Dorsolateral prefrontal cortex (tissue), 120 donors: ENCODE measurements at regions of chr3 and their contacts with region 1.

Region 1: DNA sequence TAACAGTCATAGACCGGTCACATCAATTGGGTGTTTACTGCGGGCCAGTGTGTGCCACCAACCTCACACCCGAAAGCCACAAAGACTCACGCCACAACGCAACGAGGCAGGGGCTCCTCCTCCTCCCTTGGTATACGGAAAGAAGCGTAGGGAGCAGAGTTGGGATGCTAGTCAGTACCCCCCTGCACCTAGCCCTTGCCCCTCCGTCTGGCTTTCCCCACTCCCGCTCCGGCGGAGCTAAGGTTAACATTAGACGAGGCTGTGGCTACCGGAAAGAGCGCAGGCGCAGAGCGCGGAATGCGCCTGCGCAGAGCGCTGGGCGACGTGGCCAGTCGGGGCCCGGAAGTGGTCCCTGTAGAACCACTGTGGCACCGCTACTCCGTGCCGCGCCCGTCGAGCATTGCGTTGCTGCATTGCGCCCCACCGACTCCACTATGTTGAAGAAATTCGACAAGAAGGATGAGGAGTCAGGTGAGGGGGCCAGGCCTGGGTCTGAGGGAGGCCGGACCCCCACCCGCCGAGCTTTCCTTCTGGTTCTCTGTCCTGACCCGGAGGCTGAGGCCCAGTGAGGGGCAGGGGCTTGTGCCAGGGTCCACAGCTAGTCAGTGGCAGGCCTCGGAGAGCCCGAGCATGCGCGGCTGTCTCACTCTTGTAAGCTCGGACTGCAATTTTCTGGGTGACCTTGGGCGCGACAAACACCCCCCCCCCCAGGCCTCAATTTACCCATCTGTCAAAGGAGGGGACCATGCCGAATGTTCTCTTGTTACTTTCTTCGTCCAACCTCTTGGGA is at the start of gene COPG1:
- DNase-seq: peak; percentile 69 to 93 (median 84)
- H3K4me3 ChIP-seq: peak within 1 kb of the TSS; percentile 68 to 100 (median 98)
- H3K27ac ChIP-seq: peak within 1 kb of the TSS; percentile 5 to 96 (median 83)
- H3K27me3 ChIP-seq: no peaks in the 10 kb centered on the region
- CTCF ChIP-seq: peak in 28 of 56 donors; percentile 3 to 57 (median 30)
- total RNA-seq, gene COPG1: 64.7 to 179 (median 137) TPM

Region 2: DNA sequence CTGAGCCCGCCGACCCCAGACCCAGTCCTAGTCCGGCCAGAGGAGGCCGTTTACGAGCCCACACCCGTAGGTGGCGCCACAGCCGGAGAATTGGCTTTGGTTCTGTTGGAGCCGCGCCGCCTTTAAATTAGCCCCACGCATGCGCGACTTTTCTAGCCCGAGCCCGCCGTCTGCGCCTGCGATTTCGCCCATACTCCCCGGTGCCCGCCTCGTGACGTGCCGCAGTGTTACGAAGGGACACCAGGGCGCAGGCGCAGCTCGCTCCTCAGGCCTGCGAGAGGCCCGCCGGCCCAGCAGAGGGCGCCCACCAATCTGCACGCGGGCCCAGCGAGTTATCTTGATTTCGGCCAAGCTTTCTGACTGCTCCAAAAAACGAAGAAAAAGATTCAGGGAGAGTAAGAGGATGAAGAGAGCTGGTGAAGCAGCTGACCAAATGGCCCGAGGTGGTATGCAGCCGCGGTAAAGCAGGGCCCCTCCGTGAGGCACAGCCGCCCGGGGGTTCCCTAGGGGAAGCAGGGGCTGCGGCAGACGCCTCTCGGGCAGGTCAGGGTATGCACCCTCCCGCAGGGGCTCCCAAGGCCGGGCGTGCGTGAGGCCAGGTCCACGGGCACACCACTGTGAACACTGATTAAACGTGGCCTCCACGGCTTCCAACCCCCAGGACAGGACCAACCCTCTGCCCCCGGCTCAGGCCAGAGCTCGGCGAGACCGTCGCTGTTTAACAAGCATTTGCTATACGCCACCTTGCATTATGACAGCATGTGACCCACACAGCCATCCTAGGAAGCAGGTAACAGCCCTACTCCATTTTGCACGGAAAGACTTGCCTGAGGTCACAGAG is 631.7 kb before region 1 on chr3:
- intact Hi-C with region 1: loop called (anchors 10 kb)
- DNase-seq: peak; percentile 93 to 97 (median 96)
- H3K4me3 ChIP-seq: peak overlapping the region; percentile 66 to 99 (median 93)
- H3K27ac ChIP-seq: peak overlapping the region; percentile 27 to 99 (median 93)
- H3K27me3 ChIP-seq: no peaks in the 10 kb centered on the region
- CTCF ChIP-seq: peak in 55 of 56 donors; percentile 90 to 100 (median 98)

Region 3: DNA sequence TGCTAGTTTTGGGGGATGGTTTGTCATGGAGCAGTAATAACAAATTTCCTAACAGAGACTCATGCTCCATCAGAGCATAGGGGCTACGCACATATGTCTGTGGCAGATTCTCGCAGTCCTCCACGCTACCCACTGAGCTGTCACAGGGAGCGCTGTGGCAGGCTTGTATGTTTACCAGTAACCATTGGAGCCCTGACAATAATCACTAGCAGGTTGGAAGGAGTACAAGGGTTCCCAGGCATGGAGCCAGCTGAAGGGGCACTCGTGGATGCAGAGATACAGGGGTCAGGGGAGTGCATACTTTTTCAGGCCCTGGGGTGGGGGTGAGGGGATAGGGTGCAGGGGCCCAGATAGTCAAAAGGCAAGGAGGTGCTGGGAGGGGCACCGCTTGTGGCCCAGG is 196.8 kb before region 1 on chr3:
- intact Hi-C with region 1: loop called (anchors 2 to 5 kb)
- DNase-seq: peak in 1 of 10 donors; percentile 65
- H3K4me3 ChIP-seq: no peak overlapping the region
- H3K27ac ChIP-seq: peak overlapping the region in 3 of 59 donors; percentile 4 to 74 (median 53)
- H3K27me3 ChIP-seq: no peaks in the 10 kb centered on the region
- CTCF ChIP-seq: no peak

Region 4: GRCh38 chr3:129101370-129102138 is 147.9 kb before region 1 on chr3:
- intact Hi-C with region 1: no loop called
- DNase-seq: peak in 1 of 10 donors; percentile 33
- H3K4me3 ChIP-seq: no peak overlapping the region
- H3K27ac ChIP-seq: peak overlapping the region in 7 of 59 donors; percentile 1 to 57 (median 18)
- H3K27me3 ChIP-seq: no peaks in the 10 kb centered on the region
- CTCF ChIP-seq: no peak

Region 5: DNA sequence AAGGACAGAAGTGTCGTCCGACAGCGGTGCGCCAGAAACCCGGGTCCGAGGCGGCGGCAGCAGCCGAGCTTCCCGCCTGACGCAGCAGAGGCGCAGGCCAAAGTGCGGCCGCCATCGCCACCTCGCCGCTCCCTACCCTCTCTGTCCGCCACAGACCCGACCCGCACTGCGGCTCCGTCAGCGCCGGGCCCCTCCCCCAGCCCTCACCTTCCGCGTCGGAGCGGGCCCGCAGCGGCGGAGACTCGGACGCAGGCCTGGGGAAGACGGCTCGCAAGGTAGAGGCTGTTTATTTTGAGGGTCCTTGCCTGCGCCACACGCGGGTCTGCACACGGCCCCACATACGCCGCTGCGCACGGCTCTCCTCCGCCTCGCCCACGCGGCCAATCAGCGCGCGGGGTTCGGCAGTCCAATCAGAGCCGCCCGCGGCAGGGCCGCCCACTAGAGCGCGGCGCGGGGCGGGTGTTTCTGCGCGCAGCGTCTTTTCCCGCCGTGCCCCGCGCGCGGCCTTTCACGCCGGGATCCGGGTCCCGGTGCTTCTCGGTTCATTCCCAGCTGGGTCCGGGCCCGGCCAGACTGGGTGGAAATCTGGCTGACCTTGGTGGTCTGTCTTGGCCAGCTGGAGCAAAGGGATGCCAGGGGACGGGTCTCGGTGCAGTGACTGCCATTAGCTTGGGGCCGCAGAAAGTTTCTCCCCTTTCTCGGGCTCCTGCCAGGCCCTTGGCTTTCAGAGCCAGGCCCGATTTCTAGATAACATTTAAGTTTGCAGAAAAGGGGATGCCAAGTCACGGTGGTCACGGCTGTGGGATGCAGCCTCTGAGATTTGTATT is 65.7 kb before region 1 on chr3 and contains the start of gene CNBP:
- intact Hi-C with region 1: loop called (anchors 5 kb)
- DNase-seq: peak; percentile 83 to 96 (median 93)
- H3K4me3 ChIP-seq: peak within 1 kb of the TSS; percentile 77 to 100 (median 98)
- H3K27ac ChIP-seq: peak within 1 kb of the TSS; percentile 76 to 99 (median 97)
- H3K27me3 ChIP-seq: no peaks in the 10 kb centered on the region
- CTCF ChIP-seq: peak in 34 of 56 donors; percentile 7 to 61 (median 25)
- total RNA-seq, gene CNBP: 173 to 277 (median 229) TPM

Region 6: DNA sequence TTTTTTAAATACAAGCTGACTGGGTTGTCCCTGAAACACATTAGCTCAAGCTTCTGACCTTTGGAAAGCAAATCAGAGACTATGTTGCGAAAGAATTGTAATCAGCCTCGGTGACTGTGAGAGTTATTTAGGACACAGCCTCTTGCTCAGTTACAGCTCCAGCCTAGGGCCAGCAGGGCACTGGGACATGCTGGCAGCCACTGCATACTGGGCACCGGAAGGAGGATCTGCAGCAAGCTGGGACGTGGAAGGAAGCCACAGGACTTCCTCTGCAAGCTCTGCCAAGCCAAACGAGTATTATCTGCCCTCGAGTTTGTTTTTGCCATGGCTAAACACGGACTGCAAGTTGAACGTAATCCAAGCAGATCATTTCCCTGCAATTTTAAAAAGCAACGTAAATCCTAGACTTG is 24.5 kb before region 1 on chr3:
- intact Hi-C with region 1: no loop called
- DNase-seq: peak; percentile 26 to 92 (median 65)
- H3K4me3 ChIP-seq: peak overlapping the region in 55 of 59 donors; percentile 0 to 59 (median 36)
- H3K27ac ChIP-seq: peak overlapping the region in 56 of 59 donors; percentile 0 to 83 (median 58)
- H3K27me3 ChIP-seq: no peaks in the 10 kb centered on the region
- CTCF ChIP-seq: peak in 6 of 56 donors; percentile 9 to 24 (median 12)

Region 7: DNA sequence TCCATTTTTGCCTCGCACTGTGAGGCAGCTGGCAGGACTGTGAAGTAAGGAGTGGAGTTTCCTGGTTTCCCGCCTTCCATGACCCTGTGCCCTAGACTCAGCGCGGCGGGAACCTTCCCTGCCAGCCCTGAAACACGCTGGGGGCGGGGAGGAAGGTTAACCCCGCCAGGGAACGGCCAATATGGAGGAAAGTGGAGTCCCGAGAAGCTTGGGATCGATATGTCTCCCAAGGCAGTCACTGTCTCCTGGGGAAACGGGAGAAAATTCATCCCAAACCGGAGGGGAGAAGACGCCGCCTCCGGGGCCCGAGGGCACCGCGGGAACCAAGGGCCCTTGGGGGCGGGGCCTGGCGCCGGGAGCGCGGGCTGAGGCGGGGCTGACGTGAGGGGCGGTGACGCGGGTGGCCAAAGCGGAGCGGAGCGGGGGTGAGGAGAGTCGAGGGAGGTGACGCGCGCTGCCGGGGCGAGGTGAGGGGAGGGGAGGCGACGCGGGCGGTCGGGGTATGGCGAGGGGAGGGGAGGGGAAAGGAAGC is 29.0 kb after region 1 on chr3 and contains the start of gene HMCES:
- intact Hi-C with region 1: loop called in 1 of 2 experiments (anchors 1 kb)
- DNase-seq: peak; percentile 79 to 96 (median 90)
- H3K4me3 ChIP-seq: peak within 1 kb of the TSS; percentile 50 to 97 (median 89)
- H3K27ac ChIP-seq: peak within 1 kb of the TSS; percentile 32 to 96 (median 90)
- H3K27me3 ChIP-seq: no peaks in the 10 kb centered on the region
- CTCF ChIP-seq: peak in 11 of 56 donors; percentile 4 to 23 (median 10)
- total RNA-seq, gene HMCES: 31.9 to 85.5 (median 48.3) TPM